ENCODE measurements at regions of chr11 and their contacts with region 1.

Region 1: DNA sequence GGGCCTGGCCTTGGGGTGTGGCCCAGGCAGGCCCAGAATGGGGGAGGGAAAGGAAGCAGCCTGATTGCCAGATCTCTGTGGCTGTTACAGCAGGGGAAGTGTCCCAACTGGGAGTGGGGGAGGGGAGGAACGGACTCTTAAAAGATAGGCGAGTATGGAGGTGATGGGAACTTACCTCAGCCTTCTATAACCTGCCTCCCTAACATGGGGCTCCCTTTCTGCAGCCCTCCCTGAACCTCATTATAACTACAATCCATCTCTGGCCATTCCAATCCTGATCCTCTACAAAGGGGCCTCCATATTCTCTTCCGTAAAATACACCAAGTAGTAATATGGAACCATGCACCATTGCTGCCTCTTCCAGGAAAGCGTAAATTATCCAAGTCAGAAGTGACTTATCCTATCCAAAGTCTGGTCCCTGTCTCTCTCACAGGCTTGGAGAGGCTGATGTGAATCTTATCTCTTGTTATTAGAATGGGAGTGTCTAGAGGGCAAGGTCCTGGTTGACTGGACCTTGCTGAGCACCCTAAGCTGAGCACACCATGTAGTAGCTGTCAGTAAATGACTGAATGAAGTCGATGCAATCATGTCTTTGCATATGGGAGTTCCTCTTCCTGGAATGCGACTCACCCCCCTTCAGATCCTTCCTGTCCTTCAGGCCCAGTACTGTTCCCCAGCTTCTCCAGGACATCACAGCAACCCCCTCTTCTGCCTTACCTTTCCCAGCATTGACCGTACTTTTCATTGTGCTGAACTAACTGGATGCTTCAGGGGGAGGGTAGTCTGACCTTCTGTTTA is 5.9 kb downstream of the RHOG start:
- DNase-seq: no peak
- ATAC-seq: peak; percentile 28
- H3K4me3 ChIP-seq: peak overlapping the region; percentile 38
- H3K4me3 Mint-ChIP-seq: peak overlapping the region; percentile 86 to 99 (median 94)
- H3K27ac ChIP-seq: peak overlapping the region; percentile 95
- H3K27ac Mint-ChIP-seq: peak overlapping the region; percentile 86 to 99 (median 93)
- H3K4me1 ChIP-seq: peaks cover 78 to 88% of the 10 kb centered on the region in 2 donors
- H3K4me1 Mint-ChIP-seq: peaks cover 73 to 96% (median 89%) of the 10 kb centered on the region in 7 donors
- H3K27me3 ChIP-seq: no peaks in the 10 kb centered on the region
- H3K27me3 Mint-ChIP-seq: no peaks in the 10 kb centered on the region

Region 2: DNA sequence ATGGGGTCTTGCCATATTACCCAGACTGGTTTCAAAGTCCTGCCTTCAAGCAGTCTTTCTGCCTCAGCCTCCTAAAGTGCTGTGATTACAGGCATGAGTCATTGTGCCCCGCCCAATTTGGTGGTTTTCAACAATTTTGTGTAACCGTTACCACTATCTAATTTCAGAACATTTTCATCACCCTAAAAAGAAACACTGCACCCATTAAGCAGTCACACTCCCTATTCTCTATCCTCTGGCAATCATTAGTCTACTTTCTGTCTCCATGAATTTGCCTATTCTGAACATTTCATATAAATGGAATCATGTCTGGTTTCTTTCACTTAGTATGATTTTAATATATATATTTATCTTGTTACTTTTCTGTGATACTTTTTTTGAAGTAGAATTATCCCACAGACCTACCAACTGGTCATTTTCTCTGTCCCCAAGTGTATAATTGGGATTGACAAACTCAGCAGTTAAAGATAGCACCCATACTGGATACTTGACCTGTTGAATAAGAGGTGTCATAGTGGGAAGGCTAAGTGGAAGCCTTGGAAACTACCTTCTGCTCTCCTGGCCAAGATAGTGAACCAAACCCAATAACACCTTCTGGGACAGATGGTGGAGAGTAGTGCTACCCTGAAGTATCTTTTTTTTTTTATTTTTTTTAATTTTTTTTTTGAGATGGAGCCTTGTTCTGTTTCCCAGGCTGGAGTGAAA is 85.4 kb after region 1 on chr11:
- CTCF ChIA-PET with region 1: no interaction called
- POLR2A ChIA-PET with region 1: no interaction called
- intact Hi-C with region 1: no loop called
- DNase-seq: peak in 2 of 9 donors; percentile 48 to 62
- ATAC-seq: peak; percentile 86
- H3K4me3 ChIP-seq: no peak overlapping the region
- H3K4me3 Mint-ChIP-seq: peak overlapping the region in 7 of 10 donors; percentile 12 to 66 (median 44)
- H3K27ac ChIP-seq: no peak overlapping the region
- H3K27ac Mint-ChIP-seq: peak overlapping the region in 5 of 9 donors; percentile 22 to 53 (median 30)
- H3K4me1 ChIP-seq: peaks cover 11 to 35% of the 10 kb centered on the region in 2 donors
- H3K4me1 Mint-ChIP-seq: peaks cover 39 to 70% (median 62%) of the 10 kb centered on the region in 7 donors
- H3K27me3 ChIP-seq: no peaks in the 10 kb centered on the region
- H3K27me3 Mint-ChIP-seq: no peaks in the 10 kb centered on the region

Region 3: DNA sequence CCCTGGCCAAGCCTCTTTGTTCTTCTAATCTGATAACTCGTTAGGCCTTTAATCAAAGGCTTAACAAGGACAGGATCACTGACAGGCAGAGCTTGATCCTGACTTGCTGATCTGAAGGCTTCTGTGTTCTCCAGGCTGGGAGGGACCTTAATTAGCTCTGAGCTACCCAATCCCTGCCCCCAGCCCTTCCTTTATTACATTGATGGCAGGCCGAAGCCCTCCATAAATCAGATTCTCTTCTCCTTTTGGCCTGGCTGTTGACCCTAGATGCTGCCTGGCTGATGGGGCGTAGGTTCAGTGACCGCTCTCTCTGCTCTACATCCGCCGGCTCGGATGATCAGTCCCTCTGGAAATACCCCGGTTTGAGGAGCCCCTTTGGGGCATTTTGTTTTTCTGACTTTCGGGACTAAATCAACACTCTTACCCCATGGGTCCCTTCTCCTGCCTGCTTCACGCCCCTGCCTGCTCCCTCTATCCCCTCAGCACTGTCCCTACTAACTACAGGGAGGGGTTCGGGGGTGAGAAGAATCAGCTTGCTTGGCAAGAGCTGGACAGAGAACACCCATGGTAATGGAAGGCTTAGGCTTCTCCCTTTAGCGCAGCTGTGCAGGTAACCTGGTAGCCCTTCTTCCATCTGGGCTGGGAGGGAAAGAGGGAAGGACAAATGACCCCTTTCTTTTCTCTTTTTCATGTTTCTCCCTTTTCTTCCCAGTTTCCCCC is 249.7 kb after region 1 on chr11:
- CTCF ChIA-PET with region 1: no interaction called
- POLR2A ChIA-PET with region 1: interaction called, 10 read pairs
- intact Hi-C with region 1: no loop called
- DNase-seq: no peak
- ATAC-seq: no peak
- H3K4me3 ChIP-seq: no peak overlapping the region
- H3K4me3 Mint-ChIP-seq: no peak overlapping the region
- H3K27ac ChIP-seq: no peak overlapping the region
- H3K27ac Mint-ChIP-seq: peak overlapping the region in 8 of 9 donors; percentile 10 to 99 (median 63)
- H3K4me1 ChIP-seq: peaks cover 4 to 6% of the 10 kb centered on the region in 2 donors
- H3K4me1 Mint-ChIP-seq: peaks cover 19 to 38% (median 35%) of the 10 kb centered on the region in 7 donors
- H3K27me3 ChIP-seq: no peaks in the 10 kb centered on the region
- H3K27me3 Mint-ChIP-seq: no peaks in the 10 kb centered on the region

Region 4: DNA sequence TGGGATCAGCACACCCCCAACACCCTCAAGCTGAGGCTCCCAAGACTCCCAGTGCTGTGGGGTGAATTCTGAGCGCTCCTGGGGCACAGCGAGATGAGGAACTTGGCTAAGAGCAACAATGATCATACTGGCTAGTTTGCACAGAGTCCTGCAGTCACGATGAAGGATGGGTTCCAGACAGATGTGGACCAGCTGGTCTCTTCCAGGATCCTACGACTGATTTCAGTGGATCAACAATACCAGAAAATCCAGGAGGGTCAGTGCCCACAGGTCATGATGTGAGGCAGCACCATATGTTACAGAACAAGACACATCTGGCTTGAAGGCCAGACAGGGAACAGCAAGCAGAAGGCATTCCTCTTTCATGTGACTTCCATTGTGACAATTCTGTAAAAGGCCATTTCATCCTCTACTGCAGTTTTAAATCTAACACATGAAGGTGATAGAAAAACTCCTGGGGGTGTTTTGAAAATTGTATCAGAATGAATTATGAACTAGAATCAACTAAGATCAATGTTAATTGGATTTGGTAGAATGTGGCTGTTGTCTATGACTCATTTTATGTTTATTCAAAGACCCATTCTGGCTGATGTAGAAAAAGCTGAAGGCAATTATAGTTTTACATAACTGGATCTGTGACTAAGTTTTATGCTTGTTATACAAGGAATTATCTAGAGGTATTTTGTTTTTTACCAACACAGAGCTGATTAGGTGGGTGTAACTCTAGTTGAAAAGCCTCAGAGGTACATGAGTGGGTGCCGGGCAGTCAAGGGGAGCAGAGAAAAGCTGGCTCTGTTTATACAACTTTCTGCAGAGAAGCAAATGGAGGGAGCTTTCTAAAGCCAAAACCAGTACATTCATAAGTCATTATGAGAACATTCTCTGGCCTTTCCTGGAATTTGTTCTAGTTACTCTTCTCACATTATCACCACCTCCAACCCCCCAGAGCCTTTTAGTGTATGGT is 676.7 kb after region 1 on chr11:
- CTCF ChIA-PET with region 1: no interaction called
- POLR2A ChIA-PET with region 1: no interaction called
- intact Hi-C with region 1: no loop called
- DNase-seq: no peak
- ATAC-seq: no peak
- H3K4me3 ChIP-seq: no peak overlapping the region
- H3K4me3 Mint-ChIP-seq: no peak overlapping the region
- H3K27ac ChIP-seq: no peak overlapping the region
- H3K27ac Mint-ChIP-seq: no peak overlapping the region
- H3K4me1 ChIP-seq: no peaks in the 10 kb centered on the region
- H3K4me1 Mint-ChIP-seq: no peaks in the 10 kb centered on the region
- H3K27me3 ChIP-seq: no peaks in the 10 kb centered on the region
- H3K27me3 Mint-ChIP-seq: peaks cover 0 to 25% (median 19%) of the 10 kb centered on the region in 5 donors